CD8-positive, alpha-beta memory T cell (primary cell): ENCODE measurements at regions of chr9 and their contacts with region 1.

Region 1: GRCh38 chr9:131627648-131628458 is 82.5 kb downstream of the PRRT1B start:
- DNase-seq: peak; percentile 53 to 92 (median 79)
- H3K4me3 ChIP-seq: peak overlapping the region; percentile 34
- H3K4me3 Mint-ChIP-seq: peak overlapping the region; percentile 64 to 87 (median 80)
- H3K27ac ChIP-seq: peak overlapping the region; percentile 92
- H3K27ac Mint-ChIP-seq: peak overlapping the region; percentile 95 to 99 (median 98)
- H3K4me1 ChIP-seq: peaks cover 47% of the 10 kb centered on the region
- H3K4me1 Mint-ChIP-seq: peaks cover 63 to 81% (median 69%) of the 10 kb centered on the region in 3 donors
- H3K27me3 ChIP-seq: no peaks in the 10 kb centered on the region
- H3K27me3 Mint-ChIP-seq: peaks cover 0 to 1% of the 10 kb centered on the region in 2 donors

Region 2: DNA sequence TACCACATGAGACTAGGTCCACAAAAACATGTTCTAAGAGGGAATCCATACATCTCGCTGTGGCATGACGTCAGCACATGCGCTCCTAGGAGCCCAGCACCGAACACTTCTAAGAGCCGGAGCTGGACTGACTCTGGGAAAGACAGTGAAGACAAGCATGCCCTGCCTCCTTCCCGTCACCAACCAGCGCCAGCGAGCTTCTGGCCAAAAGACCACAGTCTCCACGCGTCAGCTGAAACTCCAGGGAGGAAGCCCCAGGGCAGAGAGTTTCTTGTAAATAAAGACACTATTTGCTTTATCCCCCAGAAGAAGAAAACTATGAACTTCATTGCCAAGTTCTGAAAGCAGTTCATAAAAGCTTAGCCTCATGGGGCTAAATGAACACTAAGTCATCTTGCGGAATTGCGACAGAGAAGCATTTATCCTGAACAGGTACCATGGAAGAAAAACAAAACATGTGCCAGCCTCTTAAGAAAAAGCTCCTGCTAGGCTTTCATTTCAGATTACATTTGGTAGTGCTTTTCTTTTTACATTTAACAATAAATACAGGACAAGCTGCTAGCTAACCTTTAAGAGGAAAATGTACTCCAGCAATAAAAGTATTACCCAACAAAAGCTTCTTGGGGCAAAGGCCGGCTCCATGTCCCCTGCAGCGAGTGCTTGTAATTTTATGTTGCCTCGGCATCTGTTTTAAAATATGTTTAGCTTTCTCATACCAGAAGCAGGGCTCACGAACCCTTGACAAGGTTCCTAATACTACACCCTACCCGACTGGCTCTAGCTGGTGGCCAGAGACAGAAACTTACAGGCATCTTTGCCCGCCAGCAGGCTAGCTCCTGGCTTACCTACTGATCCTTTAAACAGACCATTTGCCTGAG is 14.0 kb after region 1 on chr9:
- CTCF ChIA-PET with region 1: interaction called, 11 read pairs
- POLR2A ChIA-PET with region 1: interaction called, 4 read pairs
- DNase-seq: no peak
- H3K4me3 ChIP-seq: no peak overlapping the region
- H3K4me3 Mint-ChIP-seq: no peak overlapping the region
- H3K27ac ChIP-seq: no peak overlapping the region
- H3K27ac Mint-ChIP-seq: peak overlapping the region in 7 of 8 donors; percentile 18 to 88 (median 49)
- H3K4me1 ChIP-seq: peaks cover 6% of the 10 kb centered on the region
- H3K4me1 Mint-ChIP-seq: peaks cover 27 to 54% (median 52%) of the 10 kb centered on the region in 3 donors
- H3K27me3 ChIP-seq: no peaks in the 10 kb centered on the region
- H3K27me3 Mint-ChIP-seq: peaks cover 0 to 1% of the 10 kb centered on the region in 2 donors

Region 3: GRCh38 chr9:131668439-131669268 is 40.8 kb after region 1 on chr9:
- CTCF ChIA-PET with region 1: interaction called, 7 read pairs
- POLR2A ChIA-PET with region 1: interaction called, 11 read pairs
- DNase-seq: peak; percentile 48 to 88 (median 63)
- H3K4me3 ChIP-seq: peak overlapping the region; percentile 54
- H3K4me3 Mint-ChIP-seq: peak overlapping the region; percentile 56 to 88 (median 79)
- H3K27ac ChIP-seq: peak overlapping the region; percentile 88
- H3K27ac Mint-ChIP-seq: peak overlapping the region; percentile 95 to 100 (median 99)
- H3K4me1 ChIP-seq: peaks cover 76% of the 10 kb centered on the region
- H3K4me1 Mint-ChIP-seq: peaks cover 93 to 100% (median 100%) of the 10 kb centered on the region in 3 donors
- H3K27me3 ChIP-seq: no peaks in the 10 kb centered on the region
- H3K27me3 Mint-ChIP-seq: no peaks in the 10 kb centered on the region

Region 4: DNA sequence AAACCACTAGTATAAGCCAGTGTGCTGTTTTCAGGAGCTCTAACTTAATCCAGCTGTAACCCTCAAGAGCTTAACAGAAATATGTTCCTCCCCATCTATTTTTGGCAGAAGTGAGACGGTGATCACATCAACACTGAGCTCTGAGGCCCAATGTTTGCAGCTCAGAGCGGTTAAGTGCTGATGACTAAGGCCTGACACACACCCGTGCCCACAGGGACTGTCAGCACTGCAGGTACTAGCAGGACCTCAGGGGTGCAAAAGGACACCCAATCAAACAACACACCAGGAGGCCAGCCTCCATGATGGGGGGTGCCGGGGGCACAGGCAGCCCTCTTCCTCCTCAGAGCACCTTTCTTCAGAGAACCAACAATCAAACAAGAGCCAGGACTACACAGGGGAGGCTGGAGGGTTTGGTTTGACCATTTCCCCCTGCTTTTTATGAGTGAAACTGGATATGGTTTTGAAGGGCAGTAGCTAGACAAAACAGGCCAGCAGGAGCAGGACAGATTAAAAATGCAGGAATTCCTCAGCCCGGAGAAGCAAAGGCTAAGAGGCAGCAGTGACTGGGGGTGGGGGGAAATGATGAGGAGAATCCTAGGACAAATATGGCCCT is 50.8 kb after region 1 on chr9:
- CTCF ChIA-PET with region 1: interaction called, 14 read pairs
- POLR2A ChIA-PET with region 1: interaction called, 17 read pairs
- DNase-seq: peak in 4 of 5 donors; percentile 53 to 92 (median 66)
- H3K4me3 ChIP-seq: peak overlapping the region; percentile 16
- H3K4me3 Mint-ChIP-seq: peak overlapping the region; percentile 41 to 94 (median 82)
- H3K27ac ChIP-seq: peak overlapping the region; percentile 52
- H3K27ac Mint-ChIP-seq: peak overlapping the region; percentile 89 to 99 (median 96)
- H3K4me1 ChIP-seq: peaks cover 54% of the 10 kb centered on the region
- H3K4me1 Mint-ChIP-seq: peaks cover 77 to 100% (median 99%) of the 10 kb centered on the region in 3 donors
- H3K27me3 ChIP-seq: no peaks in the 10 kb centered on the region
- H3K27me3 Mint-ChIP-seq: no peaks in the 10 kb centered on the region

Region 5: DNA sequence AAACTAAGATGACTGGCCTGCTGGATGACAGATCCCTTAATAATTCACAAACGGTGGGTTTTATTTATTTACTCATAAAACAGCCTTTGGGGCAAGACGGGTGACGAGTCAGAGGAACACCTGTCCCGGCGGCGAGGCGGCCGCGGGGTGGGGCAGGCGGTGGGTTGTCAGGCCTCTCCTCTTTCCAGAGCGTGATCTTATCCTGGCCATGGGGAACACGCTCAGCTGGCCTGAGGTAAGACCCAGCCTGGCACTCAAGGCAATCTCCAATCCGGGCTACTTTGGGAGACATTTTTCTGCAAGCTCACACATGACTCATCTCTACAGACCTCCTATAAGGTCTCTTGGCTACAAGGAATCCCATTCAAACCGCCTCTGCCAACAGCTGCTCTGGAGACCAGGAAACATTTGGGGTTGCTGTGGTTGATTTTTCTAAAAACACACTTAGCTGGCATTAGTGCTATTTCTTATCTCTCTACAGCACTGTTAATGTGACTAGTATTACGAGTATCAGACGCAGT is 105.7 kb after region 1 on chr9:
- CTCF ChIA-PET with region 1: interaction called, 28 read pairs
- POLR2A ChIA-PET with region 1: interaction called, 16 read pairs
- DNase-seq: peak in 4 of 5 donors; percentile 33 to 65 (median 44)
- H3K4me3 ChIP-seq: peak overlapping the region; percentile 52
- H3K4me3 Mint-ChIP-seq: peak overlapping the region; percentile 73 to 90 (median 84)
- H3K27ac ChIP-seq: peak overlapping the region; percentile 61
- H3K27ac Mint-ChIP-seq: peak overlapping the region; percentile 78 to 99 (median 92)
- H3K4me1 ChIP-seq: peaks cover 95% of the 10 kb centered on the region
- H3K4me1 Mint-ChIP-seq: peaks cover 86 to 95% (median 93%) of the 10 kb centered on the region in 3 donors
- H3K27me3 ChIP-seq: no peaks in the 10 kb centered on the region
- H3K27me3 Mint-ChIP-seq: no peaks in the 10 kb centered on the region

Region 6: GRCh38 chr9:131739980-131740648 is 112.3 kb after region 1 on chr9 and contains the start of gene RAPGEF1:
- CTCF ChIA-PET with region 1: interaction called, 28 read pairs
- POLR2A ChIA-PET with region 1: interaction called, 5 read pairs
- DNase-seq: peak; percentile 73 to 86 (median 78)
- H3K4me3 ChIP-seq: peak within 1 kb of the TSS; percentile 51
- H3K4me3 Mint-ChIP-seq: peak within 1 kb of the TSS; percentile 90 to 98 (median 94)
- H3K27ac ChIP-seq: peak within 1 kb of the TSS; percentile 33
- H3K27ac Mint-ChIP-seq: peak within 1 kb of the TSS; percentile 81 to 98 (median 94)
- H3K4me1 ChIP-seq: peaks cover 62% of the 10 kb centered on the region
- H3K4me1 Mint-ChIP-seq: peaks cover 50 to 67% (median 61%) of the 10 kb centered on the region in 3 donors
- H3K27me3 ChIP-seq: no peaks in the 10 kb centered on the region
- H3K27me3 Mint-ChIP-seq: peaks cover 0 to 2% of the 10 kb centered on the region in 2 donors
- total RNA-seq, gene RAPGEF1: 145 to 148 TPM

Region 7: DNA sequence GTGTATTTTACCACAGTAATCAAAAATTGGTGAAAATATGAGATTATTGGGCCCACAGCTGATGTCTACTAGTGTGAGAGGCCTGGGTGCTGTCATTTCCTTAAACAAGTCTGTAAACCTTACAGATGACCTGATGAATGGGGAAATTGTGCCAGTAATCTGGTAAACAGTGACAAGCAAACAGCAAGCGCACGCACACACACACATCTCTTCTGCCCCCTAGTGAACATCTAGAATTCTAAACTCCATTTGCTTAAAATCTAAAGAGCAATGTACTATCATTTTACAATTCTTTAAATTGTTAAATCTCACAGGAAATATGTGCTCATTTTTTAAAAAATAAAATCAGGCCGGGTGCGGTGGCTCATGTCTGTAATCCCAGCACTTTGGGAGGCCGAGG is 119.5 kb after region 1 on chr9:
- CTCF ChIA-PET with region 1: interaction called, 11 read pairs
- POLR2A ChIA-PET with region 1: no interaction called
- DNase-seq: peak in 1 of 5 donors; percentile 39
- H3K4me3 ChIP-seq: no peak overlapping the region
- H3K4me3 Mint-ChIP-seq: no peak overlapping the region
- H3K27ac ChIP-seq: no peak overlapping the region
- H3K27ac Mint-ChIP-seq: peak overlapping the region in 2 of 8 donors; percentile 33 to 57
- H3K4me1 ChIP-seq: peaks cover 27% of the 10 kb centered on the region
- H3K4me1 Mint-ChIP-seq: peaks cover 22 to 38% (median 37%) of the 10 kb centered on the region in 3 donors
- H3K27me3 ChIP-seq: no peaks in the 10 kb centered on the region
- H3K27me3 Mint-ChIP-seq: peaks cover 0 to 2% of the 10 kb centered on the region in 2 donors

Region 8: DNA sequence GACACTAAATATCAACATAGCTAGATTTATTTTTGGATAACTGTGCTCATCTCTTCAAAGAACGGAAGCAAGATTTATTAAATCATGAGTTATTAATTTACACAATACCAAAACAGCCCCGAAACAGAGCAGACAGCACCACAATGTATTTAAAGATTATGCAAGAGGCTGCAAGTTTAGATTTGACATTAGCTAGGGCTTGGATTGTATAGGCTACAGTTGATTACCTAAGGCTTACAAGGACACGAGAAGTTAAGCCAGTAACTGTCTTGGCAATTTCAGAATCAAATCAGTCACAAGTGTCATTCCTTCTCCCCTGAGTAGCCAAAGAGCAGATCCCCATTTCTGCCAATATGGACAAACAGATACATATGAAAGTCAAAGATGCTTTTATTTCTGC is 299.2 kb after region 1 on chr9:
- CTCF ChIA-PET with region 1: no interaction called
- POLR2A ChIA-PET with region 1: no interaction called
- DNase-seq: no peak
- H3K4me3 ChIP-seq: no peak overlapping the region
- H3K4me3 Mint-ChIP-seq: no peak overlapping the region
- H3K27ac ChIP-seq: no peak overlapping the region
- H3K27ac Mint-ChIP-seq: no peak overlapping the region
- H3K4me1 ChIP-seq: no peaks in the 10 kb centered on the region
- H3K4me1 Mint-ChIP-seq: peaks cover 0 to 5% (median 0%) of the 10 kb centered on the region in 3 donors
- H3K27me3 ChIP-seq: no peaks in the 10 kb centered on the region
- H3K27me3 Mint-ChIP-seq: no peaks in the 10 kb centered on the region